Esophagus muscularis mucosa (tissue), 4 donors: ENCODE measurements at regions of chr1 and their contacts with region 1.

Region 1: DNA sequence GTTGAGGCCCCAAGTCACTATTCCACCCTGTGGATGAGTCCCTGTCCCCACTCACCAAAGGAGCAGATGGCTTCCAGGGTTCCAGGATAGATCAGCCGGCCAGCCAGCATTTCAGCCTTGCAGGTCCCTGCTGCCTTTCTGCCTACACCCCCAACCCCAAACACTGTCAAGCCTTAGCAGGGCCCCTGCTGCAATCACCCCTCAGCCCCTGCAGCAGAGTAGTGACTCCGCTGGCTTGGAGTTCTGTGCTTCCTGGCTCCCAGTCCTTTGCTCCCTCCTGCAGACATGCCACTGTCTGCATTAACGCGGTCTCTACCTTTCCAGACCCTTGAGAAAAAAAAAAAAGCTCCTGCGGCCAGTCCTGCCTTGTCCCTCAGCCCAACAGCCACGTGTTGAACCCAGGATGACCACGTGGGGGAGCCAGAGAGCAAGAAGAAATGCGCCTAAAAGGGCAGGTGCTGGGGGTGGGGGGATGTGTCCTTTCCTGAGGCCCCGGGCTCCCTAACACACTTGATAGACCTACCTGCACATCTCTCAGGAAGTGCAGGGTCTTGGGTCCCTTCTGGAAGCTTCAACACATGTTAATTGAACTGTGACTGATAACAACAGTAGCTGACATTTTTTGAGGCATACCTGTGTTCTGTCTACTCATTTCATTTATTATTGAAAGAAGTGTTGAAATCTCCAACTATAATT is 37.4 kb downstream of the RASSF5 start:
- DNase-seq: peak; percentile 95
- H3K4me3 ChIP-seq: no peak overlapping the region
- H3K27ac ChIP-seq: no peak overlapping the region
- H3K4me1 ChIP-seq: peaks cover 7 to 18% (median 16%) of the 10 kb centered on the region in 4 donors
- H3K27me3 ChIP-seq: no peaks in the 10 kb centered on the region
- CTCF ChIP-seq: peak; percentile 83 to 91 (median 86)
- EP300 ChIP-seq: no peak
- POLR2A ChIP-seq: no peak

Region 2: DNA sequence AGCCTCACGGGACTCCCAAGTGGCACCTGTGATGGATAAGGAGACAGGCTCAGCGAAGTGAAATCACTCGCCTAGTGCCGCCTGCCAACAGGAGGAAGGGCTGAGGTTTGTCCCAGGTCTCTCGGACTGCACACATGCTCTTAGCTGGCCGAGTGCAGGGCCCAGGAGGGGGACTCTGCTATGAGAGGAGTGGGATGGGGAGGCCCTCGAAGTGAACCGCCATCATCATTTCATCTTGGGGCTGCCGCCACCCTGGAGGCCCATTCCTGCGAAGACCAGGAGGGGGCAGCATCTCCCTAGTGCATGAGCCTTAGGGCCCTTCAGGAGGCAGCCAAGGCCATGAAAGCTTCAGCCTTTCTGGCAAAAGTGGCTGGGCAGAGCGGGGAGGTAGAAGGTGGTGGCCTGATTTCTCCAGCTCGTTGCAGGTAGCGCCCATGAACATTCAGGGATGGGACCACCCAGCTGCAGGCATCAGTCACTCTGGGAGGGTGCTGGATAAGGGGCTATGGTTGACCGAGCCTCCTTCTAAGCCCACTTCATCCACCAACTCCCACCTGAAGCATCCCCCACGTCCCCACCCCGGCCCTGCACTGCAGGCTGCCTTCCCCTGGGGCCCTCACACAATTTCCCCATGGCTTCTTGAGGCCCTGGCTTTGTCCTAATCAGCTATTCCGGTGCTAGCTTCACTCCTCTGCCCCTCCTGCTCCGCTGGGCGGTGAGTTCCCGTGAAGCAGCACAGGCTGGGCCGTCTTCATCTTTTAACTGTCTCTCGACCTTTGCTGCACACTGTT is 54.5 kb before region 1 on chr1:
- intact Hi-C with region 1: loop called (anchors 2 kb)
- DNase-seq: no peak
- H3K4me3 ChIP-seq: no peak overlapping the region
- H3K27ac ChIP-seq: no peak overlapping the region
- H3K4me1 ChIP-seq: peaks cover 2 to 14% (median 9%) of the 10 kb centered on the region in 4 donors
- H3K27me3 ChIP-seq: no peaks in the 10 kb centered on the region
- CTCF ChIP-seq: peak; percentile 80 to 93 (median 85)
- EP300 ChIP-seq: no peak
- POLR2A ChIP-seq: no peak

Region 3: GRCh38 chr1:206583707-206584648 is 39.3 kb after region 1 on chr1:
- intact Hi-C with region 1: loop called (anchors 1 kb)
- DNase-seq: peak; percentile 94
- H3K4me3 ChIP-seq: no peak overlapping the region
- H3K27ac ChIP-seq: no peak overlapping the region
- H3K4me1 ChIP-seq: peaks cover 0 to 41% (median 30%) of the 10 kb centered on the region in 4 donors
- H3K27me3 ChIP-seq: no peaks in the 10 kb centered on the region
- CTCF ChIP-seq: peak; percentile 87 to 94 (median 92)
- EP300 ChIP-seq: no peak
- POLR2A ChIP-seq: no peak